Right ventricle myocardium inferior (tissue), 1 donor: ENCODE measurements at regions of chr15 and their contacts with region 1.

Region 1: GRCh38 chr15:81221449-81221848 is 24.8 kb downstream of the IL16 start:
- DNase-seq: no peak
- ATAC-seq: peak; percentile 67

Region 2: GRCh38 chr15:81146006-81146405 is 75.4 kb before region 1 on chr15:
- intact Hi-C with region 1: no loop called
- DNase-seq: no peak
- ATAC-seq: no peak

Region 3: DNA sequence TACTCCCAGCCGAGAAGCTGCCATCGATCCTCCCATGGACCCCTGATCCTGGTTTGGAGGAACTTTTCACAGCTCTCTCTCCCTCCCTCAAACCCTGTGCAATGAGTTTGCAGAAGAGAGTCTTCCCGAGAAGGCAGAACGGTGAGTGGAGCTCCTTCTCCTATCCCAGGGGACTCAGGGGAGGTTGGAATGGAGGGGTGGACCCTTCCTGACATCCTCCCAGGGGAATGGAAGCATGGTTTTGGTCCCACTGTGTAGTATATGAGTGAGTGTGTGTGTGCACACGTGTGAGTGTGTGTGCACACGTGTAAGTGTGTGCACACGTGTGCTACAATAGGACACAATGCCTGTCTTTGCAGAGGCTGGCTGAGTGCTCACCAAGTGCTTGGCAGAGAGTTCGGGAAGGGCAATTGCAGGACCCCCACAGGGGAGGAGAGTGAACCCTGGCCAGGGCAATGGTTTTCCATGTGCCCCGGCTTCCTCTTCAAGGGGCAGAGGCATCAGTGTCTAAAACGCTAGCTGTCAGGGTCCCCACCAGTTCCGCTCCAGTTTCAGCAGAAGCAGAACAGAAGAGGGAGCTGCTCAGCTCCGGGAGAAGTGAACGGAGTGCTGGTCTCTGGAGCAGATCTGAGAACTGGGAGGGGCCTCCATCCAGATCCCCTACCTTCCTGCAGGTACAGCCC is 38.6 kb before region 1 on chr15:
- intact Hi-C with region 1: loop called (anchors 5 kb)
- DNase-seq: peak; percentile 67
- ATAC-seq: peak; percentile 77